CD4-positive, alpha-beta T cell (primary cell): ENCODE measurements at regions of chr19 and their contacts with region 1.

Region 1: GRCh38 chr19:33568706-33569105 is 47.1 kb upstream of the PEPD start:
- DNase-seq: no peak
- ATAC-seq: no peak
- H3K4me3 ChIP-seq: no peak overlapping the region
- H3K4me3 Mint-ChIP-seq: no peak overlapping the region
- H3K27ac ChIP-seq: no peak overlapping the region
- H3K27ac Mint-ChIP-seq: no peak overlapping the region
- H3K4me1 ChIP-seq: no peaks in the 10 kb centered on the region
- H3K4me1 Mint-ChIP-seq: no peaks in the 10 kb centered on the region
- H3K27me3 ChIP-seq: peaks cover 10 to 30% of the 10 kb centered on the region in 2 experiments
- H3K27me3 Mint-ChIP-seq: peaks cover 72% of the 10 kb centered on the region
- CTCF ChIP-seq: no peak

Region 2: DNA sequence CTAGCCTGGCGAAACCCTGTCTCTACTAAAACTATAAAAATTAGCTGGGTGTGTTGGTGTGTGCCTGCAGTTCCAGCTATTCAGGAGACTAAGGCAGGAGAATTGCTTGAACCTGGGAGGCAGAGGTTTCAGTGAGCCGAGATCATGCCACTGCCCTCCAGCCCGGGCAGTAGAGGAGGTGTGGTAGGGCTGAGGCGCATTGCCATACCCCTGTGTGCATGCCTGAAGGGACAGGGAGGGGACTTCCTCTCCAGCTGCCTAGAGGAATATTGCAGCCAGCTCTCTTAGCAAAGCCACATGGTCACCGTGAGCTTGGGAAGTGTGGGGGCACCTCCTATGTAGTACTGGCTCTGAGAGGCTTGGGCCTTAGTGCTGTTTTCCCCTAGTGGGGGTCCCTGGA is 17.9 kb before region 1 on chr19:
- CTCF ChIA-PET with region 1: no interaction called
- POLR2A ChIA-PET with region 1: no interaction called
- intact Hi-C with region 1: loop called in 1 of 2 experiments (anchors 1 kb)
- DNase-seq: no peak
- ATAC-seq: no peak
- H3K4me3 ChIP-seq: no peak overlapping the region
- H3K4me3 Mint-ChIP-seq: no peak overlapping the region
- H3K27ac ChIP-seq: no peak overlapping the region
- H3K27ac Mint-ChIP-seq: no peak overlapping the region
- H3K4me1 ChIP-seq: no peaks in the 10 kb centered on the region
- H3K4me1 Mint-ChIP-seq: no peaks in the 10 kb centered on the region
- H3K27me3 ChIP-seq: peaks cover 0 to 2% of the 10 kb centered on the region in 2 experiments
- H3K27me3 Mint-ChIP-seq: peaks cover 5% of the 10 kb centered on the region
- CTCF ChIP-seq: no peak